CD4-positive, alpha-beta T cell (primary cell): ENCODE measurements at regions of chr6 and their contacts with region 1.

Region 1: GRCh38 chr6:78157606-78158005 is 504.8 kb downstream of the MEI4 start:
- DNase-seq: no peak
- ATAC-seq: no peak
- H3K4me3 ChIP-seq: no peak overlapping the region
- H3K4me3 Mint-ChIP-seq: no peak overlapping the region
- H3K27ac ChIP-seq: no peak overlapping the region
- H3K27ac Mint-ChIP-seq: no peak overlapping the region
- H3K4me1 ChIP-seq: no peaks in the 10 kb centered on the region
- H3K4me1 Mint-ChIP-seq: no peaks in the 10 kb centered on the region
- H3K27me3 ChIP-seq: no peaks in the 10 kb centered on the region
- H3K27me3 Mint-ChIP-seq: no peaks in the 10 kb centered on the region
- CTCF ChIP-seq: no peak

Region 2: DNA sequence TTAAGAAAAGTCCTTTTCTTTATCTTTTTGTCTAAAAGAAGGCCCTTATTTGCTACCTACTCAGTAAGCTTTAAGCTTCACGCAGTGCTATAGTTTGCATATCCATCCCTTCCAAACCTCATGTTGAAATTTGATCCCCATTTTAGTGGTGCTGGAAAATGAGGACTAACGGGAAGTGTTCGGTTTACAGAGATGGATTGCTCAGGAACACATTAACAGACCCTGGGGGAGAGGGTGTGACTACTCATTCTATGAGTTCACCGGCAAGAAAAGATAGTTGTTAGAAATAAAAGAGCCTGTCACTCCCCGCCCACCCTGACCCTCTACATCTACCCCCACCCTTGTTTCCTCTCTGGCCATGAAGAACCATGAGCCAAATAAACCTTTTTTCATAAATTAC is 41.4 kb after region 1 on chr6:
- CTCF ChIA-PET with region 1: no interaction called
- POLR2A ChIA-PET with region 1: no interaction called
- intact Hi-C with region 1: loop called in 1 of 2 experiments (anchors 1 kb)
- DNase-seq: no peak
- ATAC-seq: no peak
- H3K4me3 ChIP-seq: no peak overlapping the region
- H3K4me3 Mint-ChIP-seq: no peak overlapping the region
- H3K27ac ChIP-seq: no peak overlapping the region
- H3K27ac Mint-ChIP-seq: no peak overlapping the region
- H3K4me1 ChIP-seq: no peaks in the 10 kb centered on the region
- H3K4me1 Mint-ChIP-seq: no peaks in the 10 kb centered on the region
- H3K27me3 ChIP-seq: no peaks in the 10 kb centered on the region
- H3K27me3 Mint-ChIP-seq: no peaks in the 10 kb centered on the region
- CTCF ChIP-seq: no peak

Region 3: GRCh38 chr6:78222226-78222625 is 64.6 kb after region 1 on chr6:
- CTCF ChIA-PET with region 1: no interaction called
- POLR2A ChIA-PET with region 1: no interaction called
- intact Hi-C with region 1: no loop called
- DNase-seq: no peak
- ATAC-seq: no peak
- H3K4me3 ChIP-seq: no peak overlapping the region
- H3K4me3 Mint-ChIP-seq: no peak overlapping the region
- H3K27ac ChIP-seq: no peak overlapping the region
- H3K27ac Mint-ChIP-seq: no peak overlapping the region
- H3K4me1 ChIP-seq: no peaks in the 10 kb centered on the region
- H3K4me1 Mint-ChIP-seq: no peaks in the 10 kb centered on the region
- H3K27me3 ChIP-seq: no peaks in the 10 kb centered on the region
- H3K27me3 Mint-ChIP-seq: no peaks in the 10 kb centered on the region
- CTCF ChIP-seq: no peak

Region 4: DNA sequence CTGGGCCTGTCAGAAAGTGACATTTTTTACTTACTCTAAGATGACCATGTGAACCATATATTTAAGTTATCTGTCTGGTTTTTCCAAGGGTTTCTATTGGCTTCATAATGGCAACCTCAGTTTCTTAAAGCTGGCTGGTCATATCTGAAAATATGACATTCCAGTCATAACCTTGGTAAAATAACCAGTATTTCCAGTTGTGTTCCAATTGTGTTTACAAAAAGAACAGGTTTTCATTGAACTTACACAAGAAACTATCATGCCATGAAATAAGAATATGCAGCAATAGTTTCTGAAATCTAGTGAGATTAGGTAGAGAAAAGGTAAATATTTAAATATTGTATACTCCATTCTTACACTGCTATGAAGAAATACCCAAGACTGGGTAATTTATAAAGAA is 1138.6 kb after region 1 on chr6:
- CTCF ChIA-PET with region 1: no interaction called
- POLR2A ChIA-PET with region 1: no interaction called
- intact Hi-C with region 1: no loop called
- DNase-seq: no peak
- ATAC-seq: no peak
- H3K4me3 ChIP-seq: no peak overlapping the region
- H3K4me3 Mint-ChIP-seq: no peak overlapping the region
- H3K27ac ChIP-seq: no peak overlapping the region
- H3K27ac Mint-ChIP-seq: no peak overlapping the region
- H3K4me1 ChIP-seq: no peaks in the 10 kb centered on the region
- H3K4me1 Mint-ChIP-seq: no peaks in the 10 kb centered on the region
- H3K27me3 ChIP-seq: no peaks in the 10 kb centered on the region
- H3K27me3 Mint-ChIP-seq: no peaks in the 10 kb centered on the region
- CTCF ChIP-seq: no peak